BJ (cell line): ENCODE measurements at regions of chr22 and their contacts with region 1.

Region 1: GRCh38 chr22:31970490-31971444 is 26.4 kb downstream of the YWHAH start:
- DNase-seq: no peak
- H3K4me3 ChIP-seq: peak overlapping the region; percentile 49
- H3K27me3 ChIP-seq: no peaks in the 10 kb centered on the region
- CTCF ChIP-seq: peak; percentile 98

Region 2: DNA sequence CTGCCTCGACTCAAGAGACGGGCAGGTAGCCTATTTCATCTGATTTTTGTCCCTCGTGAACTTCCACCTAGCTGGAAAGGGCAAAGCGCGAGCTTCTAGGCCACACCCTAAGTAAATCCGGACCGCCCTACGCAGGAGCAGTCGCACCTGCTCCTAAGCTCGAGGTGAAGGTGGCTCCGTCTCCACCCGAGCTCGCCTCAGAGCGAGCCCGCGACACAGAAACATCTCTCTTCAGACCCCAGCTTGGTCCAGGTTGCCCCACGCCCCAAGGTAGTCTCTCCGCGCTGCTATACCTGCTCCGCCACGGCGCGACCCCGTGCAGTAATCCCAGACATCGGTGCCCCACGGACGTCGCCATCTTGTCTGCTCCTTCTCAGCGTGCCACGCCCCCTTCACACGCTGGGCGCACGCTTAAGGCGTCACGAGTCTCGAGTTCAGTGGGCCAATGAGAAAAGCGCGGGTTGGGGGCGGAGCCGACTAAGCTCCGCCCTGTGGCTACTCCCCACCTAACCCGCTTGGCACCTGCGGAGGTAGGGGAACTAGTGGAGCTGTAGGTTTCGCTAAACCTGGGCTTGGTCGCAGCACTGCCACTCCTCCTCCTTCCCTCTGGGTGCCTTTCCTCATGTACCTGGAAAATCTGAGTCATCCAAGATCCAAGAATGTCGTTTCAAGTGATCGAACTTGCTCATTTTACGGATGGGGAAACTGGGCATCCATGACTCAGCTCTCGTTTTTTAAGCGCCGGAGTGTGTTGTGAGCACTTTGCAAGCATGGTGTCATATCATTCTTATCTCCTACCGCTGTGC is 308.7 kb before region 1 on chr22 and contains the start of gene PISD:
- CTCF ChIA-PET with region 1: interaction called, 23 read pairs
- POLR2A ChIA-PET with region 1: no interaction called
- DNase-seq: no peak
- H3K4me3 ChIP-seq: peak within 1 kb of the TSS; percentile 86
- H3K27me3 ChIP-seq: no peaks in the 10 kb centered on the region
- CTCF ChIP-seq: no peak
- polyA plus RNA-seq, gene PISD: 18.7 and 26.9 TPM in 2 replicates

Region 3: DNA sequence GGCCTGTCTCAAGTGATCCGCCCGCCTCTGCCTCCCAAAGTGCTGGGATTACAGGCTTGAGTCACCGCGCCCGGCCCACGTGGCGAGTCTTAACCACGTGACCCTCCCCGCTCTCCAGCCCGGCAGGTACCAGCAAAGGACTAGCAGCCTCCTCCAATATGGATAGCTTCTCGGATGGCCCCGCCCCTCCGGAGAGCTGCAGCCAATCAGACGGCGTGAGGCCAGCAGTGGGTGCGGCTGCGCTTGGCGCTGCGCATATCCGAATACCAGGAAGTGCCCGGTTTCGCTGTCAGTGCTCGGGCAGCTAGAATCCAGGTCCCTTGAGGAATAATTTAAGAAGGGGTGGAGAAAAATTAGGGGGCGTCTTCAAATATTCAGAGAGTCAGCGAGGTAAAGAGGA is 294.1 kb before region 1 on chr22:
- CTCF ChIA-PET with region 1: interaction called, 11 read pairs
- POLR2A ChIA-PET with region 1: no interaction called
- DNase-seq: peak; percentile 60
- H3K4me3 ChIP-seq: peak overlapping the region; percentile 35
- H3K27me3 ChIP-seq: no peaks in the 10 kb centered on the region
- CTCF ChIP-seq: no peak

Region 4: DNA sequence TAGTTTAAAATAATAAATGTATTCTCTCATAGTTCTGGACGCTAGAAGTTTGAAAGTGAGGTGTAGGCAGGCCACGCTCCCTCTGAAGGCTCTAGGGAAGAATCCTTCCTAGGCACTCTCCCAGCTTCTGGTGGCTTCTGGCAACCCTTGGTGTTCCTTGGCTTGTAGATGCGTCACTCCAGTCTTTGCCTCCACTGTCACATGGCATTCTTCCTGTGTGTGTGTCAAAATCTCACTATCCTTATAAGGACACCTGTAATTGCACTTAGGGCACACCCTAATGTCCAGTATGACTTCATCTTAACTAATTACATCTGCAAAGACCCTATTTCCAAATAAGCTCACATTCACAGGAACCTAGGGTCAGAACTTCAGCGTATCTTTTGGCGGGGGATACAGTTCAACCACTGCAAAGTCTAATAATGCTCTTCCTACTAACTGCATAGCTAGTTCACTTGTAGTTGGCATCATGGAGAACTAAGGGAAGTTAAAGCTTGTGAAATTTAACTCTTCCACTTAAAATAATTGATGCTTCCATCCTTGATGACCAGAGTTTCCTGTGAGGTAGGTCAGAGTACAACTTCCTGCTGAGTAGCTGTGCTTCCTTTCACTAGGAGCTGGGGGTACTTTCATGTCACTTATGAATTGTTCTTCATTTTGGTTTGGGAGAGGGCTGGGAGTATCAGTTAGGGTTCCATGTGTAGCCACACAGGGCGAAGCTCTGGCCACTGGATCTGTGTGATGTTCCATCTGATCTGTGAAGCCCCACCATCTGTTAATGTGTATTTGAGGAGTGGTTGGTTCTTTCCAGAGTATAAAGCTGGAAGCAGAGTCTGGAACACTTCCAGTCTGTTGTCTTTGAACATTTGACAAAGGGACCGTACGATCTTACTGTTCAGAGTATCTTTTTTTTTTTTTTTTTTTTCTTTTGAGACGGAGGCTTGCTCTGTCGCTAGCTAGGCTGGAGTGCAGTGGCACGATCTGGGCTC is 15.9 kb before region 1 on chr22:
- CTCF ChIA-PET with region 1: interaction called, 18 read pairs
- POLR2A ChIA-PET with region 1: interaction called, 3 read pairs
- DNase-seq: no peak
- H3K4me3 ChIP-seq: no peak overlapping the region
- H3K27me3 ChIP-seq: no peaks in the 10 kb centered on the region
- CTCF ChIP-seq: no peak

Region 5: GRCh38 chr22:32265882-32266767 is 295.4 kb after region 1 on chr22:
- CTCF ChIA-PET with region 1: interaction called, 12 read pairs
- POLR2A ChIA-PET with region 1: no interaction called
- DNase-seq: no peak
- H3K4me3 ChIP-seq: no peak overlapping the region
- H3K27me3 ChIP-seq: no peaks in the 10 kb centered on the region
- CTCF ChIP-seq: peak; percentile 90